Transverse colon (tissue), 4 donors: ENCODE measurements at regions of chr6 and their contacts with region 1.

Region 1: DNA sequence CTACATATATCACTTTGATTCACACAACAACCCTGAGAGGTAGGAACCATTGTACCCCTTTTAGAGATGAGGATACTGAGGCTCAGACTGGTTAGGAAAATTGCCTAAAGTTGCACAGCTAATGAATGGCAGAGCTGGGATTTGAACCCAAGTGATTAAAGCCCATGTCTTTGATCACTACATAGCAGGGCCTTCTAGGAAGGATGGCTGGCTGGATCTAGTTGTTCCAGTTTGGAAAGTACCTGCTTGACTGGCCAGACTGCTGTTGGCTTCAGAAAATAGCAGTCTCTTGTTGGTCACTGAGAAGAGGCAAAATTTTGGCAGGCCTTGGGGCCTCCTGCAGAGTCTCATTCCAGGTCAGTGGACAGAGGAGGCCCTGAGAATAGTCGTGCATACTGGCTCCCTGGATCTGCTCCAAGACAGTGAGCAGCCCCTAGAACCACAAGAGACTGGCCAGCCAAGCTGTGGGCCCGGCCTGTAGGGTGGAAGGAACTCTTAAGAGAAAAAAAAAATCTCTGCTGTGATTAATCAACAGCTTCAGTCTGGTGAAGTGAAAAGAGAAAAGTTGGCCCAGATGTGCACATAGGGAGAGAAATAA is 17.5 kb downstream of the PPARD start:
- DNase-seq: no peak
- H3K4me3 ChIP-seq: no peak overlapping the region
- H3K27ac ChIP-seq: peak overlapping the region in 3 of 4 donors; percentile 19 to 35 (median 31)
- H3K4me1 ChIP-seq: peaks cover 3 to 27% (median 7%) of the 10 kb centered on the region in 4 donors
- H3K27me3 ChIP-seq: no peaks in the 10 kb centered on the region
- CTCF ChIP-seq: no peak
- EP300 ChIP-seq: no peak
- POLR2A ChIP-seq: no peak

Region 2: DNA sequence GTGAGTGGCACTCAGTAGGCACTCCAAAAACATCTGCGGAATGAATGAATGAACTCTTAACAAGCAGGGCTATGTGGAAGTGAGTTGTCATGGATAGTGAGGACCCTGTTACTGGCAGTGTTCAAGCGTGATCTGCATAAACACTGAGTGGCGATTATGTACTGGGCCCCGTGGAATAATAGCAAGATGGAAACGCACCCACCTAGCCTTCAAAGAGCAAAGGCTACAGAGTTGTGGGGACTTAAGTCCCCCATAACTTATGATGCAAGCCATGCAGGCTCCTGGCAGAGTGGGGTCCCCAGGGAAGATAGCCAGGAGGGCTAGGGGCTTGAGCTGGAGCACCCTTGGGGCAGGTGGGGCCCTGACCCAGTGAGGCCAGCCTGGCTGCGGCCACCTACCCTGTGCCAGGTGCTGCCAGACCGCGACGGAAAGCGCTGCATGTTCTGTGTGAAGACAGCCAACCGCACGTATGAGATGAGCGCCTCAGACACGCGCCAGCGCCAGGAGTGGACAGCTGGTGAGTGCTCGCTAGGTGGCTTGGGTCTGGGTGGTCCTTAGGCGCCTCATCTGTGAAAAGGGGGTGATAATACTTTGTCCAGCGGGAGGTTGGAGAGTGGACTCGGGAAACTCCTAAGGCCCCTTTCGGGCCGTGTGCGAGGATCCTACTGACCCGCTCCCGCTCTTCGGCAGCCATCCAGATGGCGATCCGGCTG is 42.2 kb before region 1 on chr6:
- in situ Hi-C with region 1: no loop called
- intact Hi-C with region 1: loop called (anchors 1 kb)
- DNase-seq: no peak
- H3K4me3 ChIP-seq: peak overlapping the region; percentile 18 to 59 (median 40)
- H3K27ac ChIP-seq: peak overlapping the region; percentile 56 to 71 (median 63)
- H3K4me1 ChIP-seq: peaks cover 0 to 21% (median 14%) of the 10 kb centered on the region in 4 donors
- H3K27me3 ChIP-seq: no peaks in the 10 kb centered on the region
- CTCF ChIP-seq: no peak
- EP300 ChIP-seq: no peak
- POLR2A ChIP-seq: no peak

Region 3: DNA sequence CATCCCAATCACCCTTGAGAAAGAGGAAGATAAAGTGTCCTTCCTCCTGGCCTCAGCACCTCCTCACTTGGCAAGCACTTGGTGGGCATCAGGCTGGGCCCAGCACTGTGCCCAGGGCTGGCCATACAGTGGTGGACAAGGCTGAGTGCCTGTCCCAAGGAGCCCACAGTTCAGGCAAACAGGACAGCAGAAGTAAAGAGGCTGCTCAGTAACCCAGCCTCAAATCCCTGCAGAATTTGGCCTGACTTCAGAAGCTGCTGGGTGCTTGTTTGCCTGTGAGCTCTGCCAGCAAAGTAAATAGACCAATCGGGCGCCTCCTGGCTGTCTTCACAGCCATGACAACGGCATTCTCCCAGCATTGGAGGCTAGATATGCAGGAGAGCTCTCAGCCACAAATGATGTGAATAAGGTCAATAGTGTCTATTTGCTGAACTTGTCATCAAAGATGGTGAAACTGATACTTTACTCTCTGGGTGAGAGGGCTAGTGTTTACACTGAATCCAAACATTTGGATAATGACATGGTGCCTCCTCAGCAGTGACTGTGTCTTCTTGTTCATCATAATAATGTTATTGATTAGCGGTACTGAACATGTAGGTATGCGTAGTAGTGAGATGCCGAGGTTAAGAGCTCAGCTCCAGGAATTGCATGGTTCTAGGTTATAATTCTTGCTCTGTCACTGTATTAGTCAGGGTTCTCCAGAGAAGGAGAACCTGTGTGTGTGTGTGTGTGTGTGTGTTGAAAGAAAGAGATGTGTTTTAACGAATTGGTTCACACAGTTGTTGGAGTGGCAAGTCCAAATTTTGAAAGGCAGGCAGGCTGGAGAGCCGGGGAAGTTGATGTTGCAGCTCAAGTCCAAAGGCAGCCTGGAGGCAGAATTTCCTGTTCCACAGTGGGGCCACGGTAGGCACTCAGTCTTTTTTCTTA is 55.5 kb after region 1 on chr6:
- in situ Hi-C with region 1: no loop called
- intact Hi-C with region 1: loop called (anchors 10 kb)
- DNase-seq: peak; percentile 72
- H3K4me3 ChIP-seq: no peak overlapping the region
- H3K27ac ChIP-seq: peak overlapping the region in 1 of 4 donors; percentile 23
- H3K4me1 ChIP-seq: peaks cover 11 to 38% (median 18%) of the 10 kb centered on the region in 4 donors
- H3K27me3 ChIP-seq: no peaks in the 10 kb centered on the region
- CTCF ChIP-seq: peak; percentile 40 to 66 (median 59)
- EP300 ChIP-seq: no peak
- POLR2A ChIP-seq: no peak